ENCODE measurements at regions of chr16 and their contacts with region 1.

Region 1: DNA sequence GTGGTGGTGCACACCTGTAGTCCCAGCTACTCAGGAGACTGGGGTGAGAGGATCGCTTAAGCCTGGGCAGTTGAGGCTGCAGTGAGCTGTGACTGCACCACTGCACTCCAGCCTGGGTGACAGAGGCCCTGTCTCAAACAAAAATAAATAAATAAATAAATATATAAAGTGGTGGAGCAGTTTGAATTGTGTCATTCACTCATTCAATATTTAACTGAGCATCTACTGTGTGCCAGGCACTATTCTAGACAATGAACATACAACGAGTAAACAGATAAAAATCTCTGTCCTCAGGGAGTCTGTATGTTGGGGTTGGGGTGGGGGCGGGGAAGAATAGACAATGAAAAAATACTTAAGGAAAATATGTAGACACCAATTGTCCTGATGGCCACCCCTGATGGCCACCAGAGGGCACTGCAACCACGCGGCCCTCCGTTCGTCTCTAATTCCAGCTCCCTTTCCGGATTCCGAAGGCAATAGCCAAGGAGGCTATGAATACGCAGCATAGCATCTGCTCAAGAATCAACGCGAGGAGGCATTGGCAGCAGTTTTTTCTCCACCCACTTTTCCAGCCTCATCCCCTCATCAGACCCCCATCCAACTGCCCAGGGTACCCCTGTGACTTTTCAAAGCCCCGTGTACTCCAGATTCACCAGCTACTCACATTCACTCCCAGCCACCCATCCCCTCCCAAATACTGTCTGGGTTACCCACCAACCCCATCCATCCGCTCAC is 21.4 kb downstream of the QPRT start:
- DNase-seq: peak; percentile 45
- H3K4me3 ChIP-seq: no peak overlapping the region
- H3K27me3 ChIP-seq: no peaks in the 10 kb centered on the region
- CTCF ChIP-seq: peak; percentile 93

Region 2: DNA sequence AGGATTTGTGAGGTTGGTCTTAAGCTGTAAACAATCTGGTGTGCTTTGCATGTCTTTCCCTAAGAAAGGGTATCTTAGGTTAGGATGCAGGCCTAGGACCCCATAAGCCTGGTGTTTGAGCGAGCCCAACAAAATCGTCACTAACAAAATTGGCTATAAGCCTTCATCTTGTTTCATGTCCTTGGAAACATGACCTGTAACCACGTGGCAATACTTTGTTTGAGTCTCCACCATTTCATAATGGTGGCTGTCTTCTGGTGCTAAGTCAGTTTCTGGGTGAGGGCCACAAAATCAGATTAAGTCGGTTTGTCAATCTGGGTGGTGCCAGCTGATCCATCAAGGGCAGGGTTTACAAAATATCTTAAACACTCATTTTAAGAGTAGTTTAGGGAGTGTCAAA is 12.3 kb after region 1 on chr16:
- CTCF ChIA-PET with region 1: interaction called, 15 read pairs
- POLR2A ChIA-PET with region 1: no interaction called
- DNase-seq: no peak
- H3K4me3 ChIP-seq: no peak overlapping the region
- H3K27me3 ChIP-seq: peaks cover 2% of the 10 kb centered on the region
- CTCF ChIP-seq: no peak

Region 3: GRCh38 chr16:29729116-29729521 is 28.7 kb after region 1 on chr16:
- CTCF ChIA-PET with region 1: interaction called, 16 read pairs
- POLR2A ChIA-PET with region 1: no interaction called
- DNase-seq: no peak
- H3K4me3 ChIP-seq: no peak overlapping the region
- H3K27me3 ChIP-seq: peaks cover 5% of the 10 kb centered on the region
- CTCF ChIP-seq: peak; percentile 75

Region 4: DNA sequence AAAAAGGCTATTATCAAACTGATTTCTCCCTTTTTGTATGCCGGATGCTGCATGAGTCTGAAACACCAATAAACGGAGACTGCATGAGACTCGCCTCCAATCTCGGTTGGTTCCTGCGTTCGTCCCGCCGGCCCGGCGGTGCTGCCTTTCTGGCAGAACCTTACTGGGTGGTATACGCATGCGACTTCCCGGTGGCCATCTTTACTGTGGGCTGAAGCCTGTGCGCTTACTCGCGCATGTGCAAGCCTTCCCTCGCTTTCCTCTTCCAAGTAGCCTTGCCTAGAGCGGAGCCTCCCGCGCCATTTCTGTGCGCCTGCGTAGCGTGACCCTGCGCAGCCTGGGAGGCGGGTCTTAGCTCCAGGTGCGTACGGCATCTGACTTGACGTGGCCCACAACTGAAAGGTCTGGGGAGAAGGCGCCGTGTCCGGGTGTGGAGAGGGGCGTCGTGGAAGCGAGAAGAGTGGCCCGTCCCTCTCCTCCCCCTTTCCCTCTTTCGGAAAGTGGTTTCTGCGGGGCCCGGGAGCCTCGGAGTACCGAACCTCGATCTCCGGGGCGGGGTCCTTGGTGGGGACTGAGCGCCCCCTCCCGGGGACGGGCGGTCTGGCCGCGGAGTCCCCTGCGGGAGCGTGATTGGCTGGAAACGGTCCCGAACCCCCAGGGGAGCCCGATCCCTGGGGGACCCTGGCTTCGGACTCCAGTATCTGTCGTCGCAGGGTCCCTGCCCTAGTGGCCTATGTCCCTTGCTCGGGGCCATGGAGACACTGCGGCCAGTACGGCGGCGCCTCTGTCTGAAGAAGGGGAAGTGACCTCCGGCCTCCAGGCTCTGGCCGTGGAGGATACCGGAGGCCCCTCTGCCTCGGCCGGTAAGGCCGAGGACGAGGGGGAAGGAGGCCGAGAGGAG is 115.6 kb after region 1 on chr16 and contains the start of gene PAGR1:
- CTCF ChIA-PET with region 1: no interaction called
- POLR2A ChIA-PET with region 1: interaction called, 21 read pairs
- DNase-seq: peak; percentile 98
- H3K4me3 ChIP-seq: peak within 1 kb of the TSS; percentile 85
- H3K27me3 ChIP-seq: no peaks in the 10 kb centered on the region
- CTCF ChIP-seq: peak; percentile 97
- polyA plus RNA-seq, gene PAGR1: 13.9 and 15.6 TPM in 2 replicates

Region 5: GRCh38 chr16:29909391-29909790 is 209.0 kb after region 1 on chr16:
- CTCF ChIA-PET with region 1: no interaction called
- POLR2A ChIA-PET with region 1: interaction called, 11 read pairs
- DNase-seq: no peak
- H3K4me3 ChIP-seq: no peak overlapping the region
- H3K27me3 ChIP-seq: no peaks in the 10 kb centered on the region
- CTCF ChIP-seq: no peak

Region 6: DNA sequence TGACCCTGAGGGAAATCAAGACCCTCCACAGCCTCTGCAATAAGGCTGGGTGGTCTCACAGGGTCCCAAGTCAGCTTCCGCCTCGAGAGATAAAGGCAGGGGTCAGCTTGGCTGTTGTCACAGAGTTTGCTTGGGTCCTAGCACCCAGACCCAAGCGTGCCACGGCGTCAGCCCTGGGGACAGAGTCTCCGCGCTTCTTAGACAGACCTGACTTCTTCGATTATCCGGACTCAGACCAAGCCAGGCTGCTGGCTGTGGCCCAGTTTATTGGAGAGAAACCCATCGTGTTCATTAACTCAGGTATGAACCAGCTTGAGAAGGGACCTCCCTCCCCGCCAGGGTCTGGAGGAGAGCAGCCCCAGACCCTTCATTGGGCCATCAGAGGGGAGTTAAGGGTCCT is 323.2 kb after region 1 on chr16:
- CTCF ChIA-PET with region 1: interaction called, 11 read pairs
- POLR2A ChIA-PET with region 1: no interaction called
- DNase-seq: no peak
- H3K4me3 ChIP-seq: no peak overlapping the region
- H3K27me3 ChIP-seq: peaks cover 15% of the 10 kb centered on the region
- CTCF ChIP-seq: no peak

Region 7: DNA sequence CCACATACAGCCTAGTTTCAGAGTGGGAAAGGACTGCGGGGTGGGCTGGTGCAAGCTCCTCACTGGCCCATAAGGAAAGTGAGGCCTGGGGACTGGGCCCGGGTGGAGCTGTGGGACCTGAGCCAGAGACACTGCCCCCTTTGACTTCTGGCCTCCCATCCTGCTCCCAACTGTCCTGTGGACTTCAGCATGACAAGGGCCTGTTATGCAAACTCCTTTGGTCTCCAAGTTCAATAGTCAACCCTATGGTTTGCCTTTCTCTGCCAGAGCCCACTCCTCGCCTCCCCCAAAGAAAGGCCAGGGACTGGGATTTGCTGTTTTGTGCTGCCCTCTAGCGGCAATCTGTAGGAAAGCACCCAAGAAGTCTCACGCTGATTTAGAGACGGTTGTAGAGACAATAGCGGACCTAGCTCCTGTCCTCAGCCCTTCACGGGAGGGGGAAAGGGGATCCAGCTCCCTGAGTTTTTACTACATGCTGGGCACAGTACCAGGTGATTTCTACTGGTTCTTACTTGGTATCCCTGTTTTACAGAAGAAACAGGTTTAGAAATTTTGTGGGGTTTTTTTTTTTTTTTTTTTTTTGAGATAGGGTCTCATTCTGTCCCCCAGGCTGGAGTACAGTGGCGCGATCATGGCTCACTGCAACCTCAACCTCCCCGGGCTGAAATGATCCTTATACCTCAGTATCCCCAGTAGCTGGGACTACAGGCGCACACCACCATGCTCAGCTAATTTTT is 331.8 kb after region 1 on chr16:
- CTCF ChIA-PET with region 1: interaction called, 32 read pairs
- POLR2A ChIA-PET with region 1: no interaction called
- DNase-seq: no peak
- H3K4me3 ChIP-seq: no peak overlapping the region
- H3K27me3 ChIP-seq: peaks cover 30% of the 10 kb centered on the region
- CTCF ChIP-seq: peak; percentile 83

Region 8: DNA sequence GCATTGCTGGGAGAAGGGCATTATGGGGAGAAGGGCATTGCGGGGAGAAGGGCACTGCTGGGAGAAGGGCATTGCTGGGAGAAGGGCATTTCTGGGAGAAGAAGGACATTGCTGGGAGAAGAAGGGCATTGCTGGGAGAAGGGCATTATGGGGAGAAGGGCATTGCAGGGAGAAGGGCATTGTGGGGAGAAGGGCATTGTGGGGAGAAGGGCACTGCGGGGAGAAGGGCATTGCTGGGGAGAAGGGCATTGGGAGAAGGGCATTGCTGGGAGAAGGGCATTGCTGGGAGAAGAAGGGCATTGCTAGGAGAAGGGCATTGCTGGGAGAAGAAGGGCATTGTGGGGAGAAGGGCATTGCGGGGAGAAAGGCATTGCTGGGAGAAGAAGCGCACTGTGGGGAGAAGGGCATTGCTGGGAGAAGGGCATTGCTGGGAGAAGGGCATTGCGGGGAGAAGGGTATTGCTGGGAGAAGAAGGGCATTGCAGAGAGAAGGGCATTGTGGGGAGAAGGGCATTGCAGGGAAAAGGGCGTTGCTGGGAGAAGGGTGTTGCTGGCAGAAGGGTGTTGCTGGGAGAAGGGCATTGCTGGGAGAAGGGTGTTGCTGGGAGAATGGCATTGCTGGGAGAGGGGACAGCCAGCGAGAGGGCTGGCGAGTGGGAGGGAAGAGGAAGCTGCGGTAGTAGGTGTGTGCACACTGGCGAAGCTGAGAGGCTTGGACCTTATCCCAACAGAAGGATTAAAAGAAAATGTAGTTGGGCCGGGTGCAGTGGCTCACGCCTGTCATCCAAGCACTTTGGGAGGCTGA is 1521.1 kb after region 1 on chr16:
- CTCF ChIA-PET with region 1: no interaction called
- POLR2A ChIA-PET with region 1: no interaction called
- DNase-seq: no peak
- H3K4me3 ChIP-seq: no peak overlapping the region
- H3K27me3 ChIP-seq: peaks cover 11% of the 10 kb centered on the region
- CTCF ChIP-seq: no peak

Measured in BJ (cell line).